HEK293 (cell line): ENCODE measurements at regions of chr13 and their contacts with region 1.

Region 1: GRCh38 chr13:75694722-75695121 is 58.6 kb downstream of the LMO7 start:
- H3K4me3 ChIP-seq: no peak overlapping the region
- H3K27ac ChIP-seq: no peak overlapping the region
- H3K4me1 ChIP-seq: no peaks in the 10 kb centered on the region
- CTCF ChIP-seq: no peak

Region 2: GRCh38 chr13:75521956-75522355 is 172.8 kb before region 1 on chr13:
- CTCF ChIA-PET with region 1: no interaction called
- POLR2A ChIA-PET with region 1: no interaction called
- H3K4me3 ChIP-seq: no peak overlapping the region
- H3K27ac ChIP-seq: no peak overlapping the region
- H3K4me1 ChIP-seq: no peaks in the 10 kb centered on the region
- CTCF ChIP-seq: no peak

Region 3: GRCh38 chr13:75704579-75705320 is 10.0 kb after region 1 on chr13:
- CTCF ChIA-PET with region 1: interaction called, 27 read pairs
- POLR2A ChIA-PET with region 1: no interaction called
- H3K4me3 ChIP-seq: no peak overlapping the region
- H3K27ac ChIP-seq: no peak overlapping the region
- H3K4me1 ChIP-seq: no peaks in the 10 kb centered on the region
- CTCF ChIP-seq: no peak

Region 4: GRCh38 chr13:75715601-75716523 is 21.1 kb after region 1 on chr13:
- CTCF ChIA-PET with region 1: interaction called, 22 read pairs
- POLR2A ChIA-PET with region 1: no interaction called
- H3K4me3 ChIP-seq: no peak overlapping the region
- H3K27ac ChIP-seq: no peak overlapping the region
- H3K4me1 ChIP-seq: no peaks in the 10 kb centered on the region
- CTCF ChIP-seq: no peak

Region 5: DNA sequence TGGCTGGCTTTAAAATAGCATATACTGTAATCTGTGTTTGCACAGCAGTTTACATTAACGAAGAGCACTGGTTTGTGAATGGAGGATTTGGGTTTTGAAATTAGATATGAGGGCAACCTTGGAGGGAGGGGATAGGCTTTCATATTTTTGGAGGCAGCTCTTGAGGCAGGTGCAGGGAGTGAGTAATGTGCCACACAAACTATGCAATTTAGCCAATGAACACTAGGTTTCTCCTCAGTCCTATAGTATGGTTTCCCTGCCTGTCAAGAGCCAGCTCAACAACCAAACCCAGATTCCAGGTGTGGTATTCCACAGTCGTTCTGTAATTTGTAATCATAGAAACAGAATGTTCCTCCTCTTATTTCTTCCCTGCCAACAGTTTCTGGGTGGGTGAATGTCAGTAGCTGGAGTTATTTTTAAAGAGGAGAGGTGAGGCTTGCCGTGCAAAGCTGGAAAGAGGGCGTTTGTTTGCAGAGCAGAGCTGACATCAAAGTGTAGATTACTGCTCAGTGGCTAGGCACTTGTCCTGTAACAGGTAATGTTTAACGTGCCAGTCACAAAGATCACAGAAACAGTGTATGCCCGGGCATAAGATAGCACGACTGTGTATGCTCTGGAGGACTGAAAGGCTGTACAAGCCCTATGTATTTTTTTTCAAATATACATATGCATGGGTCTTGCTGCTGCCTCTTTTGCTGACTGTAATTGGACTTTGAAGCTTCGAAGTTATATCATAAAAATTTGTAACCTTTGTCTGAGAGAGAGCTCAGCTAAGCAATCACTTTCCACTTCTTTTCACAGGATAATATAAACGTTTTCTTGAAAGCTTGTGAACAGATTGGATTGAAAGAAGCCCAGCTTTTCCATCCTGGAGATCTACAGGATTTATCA is 65.7 kb after region 1 on chr13:
- CTCF ChIA-PET with region 1: interaction called, 13 read pairs
- POLR2A ChIA-PET with region 1: no interaction called
- H3K4me3 ChIP-seq: no peak overlapping the region; the same call in 1 of the 2 replicates
- H3K27ac ChIP-seq: no peak overlapping the region
- H3K4me1 ChIP-seq: no peaks in the 10 kb centered on the region
- CTCF ChIP-seq: no peak

Region 6: DNA sequence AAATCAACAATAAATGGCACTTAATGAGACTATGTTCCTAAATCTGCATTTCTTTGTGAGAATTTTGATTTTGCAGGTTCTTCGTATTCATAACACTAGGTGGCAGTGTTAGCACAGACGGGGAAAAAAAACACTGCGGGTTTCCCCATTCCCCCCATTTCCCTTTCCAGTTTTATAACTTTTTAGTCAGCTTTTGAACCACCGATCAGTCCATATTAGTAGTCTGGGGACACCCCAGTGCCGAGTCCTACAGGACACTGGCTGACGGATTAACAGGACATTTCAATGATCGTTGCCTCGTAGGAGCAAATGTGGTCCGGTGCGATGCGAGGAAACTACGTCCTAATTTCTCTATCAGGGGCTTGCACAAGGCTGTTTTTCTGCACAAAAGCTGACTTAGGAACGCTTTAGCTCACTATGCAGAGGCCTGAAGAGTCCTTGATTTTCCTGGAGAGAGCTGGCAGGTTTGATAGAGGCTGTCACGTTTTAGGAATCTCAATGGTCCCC is 175.7 kb after region 1 on chr13:
- CTCF ChIA-PET with region 1: interaction called, 49 read pairs
- POLR2A ChIA-PET with region 1: no interaction called
- H3K4me3 ChIP-seq: no peak overlapping the region
- H3K27ac ChIP-seq: no peak overlapping the region
- H3K4me1 ChIP-seq: no peaks in the 10 kb centered on the region
- CTCF ChIP-seq: no peak

Region 7: DNA sequence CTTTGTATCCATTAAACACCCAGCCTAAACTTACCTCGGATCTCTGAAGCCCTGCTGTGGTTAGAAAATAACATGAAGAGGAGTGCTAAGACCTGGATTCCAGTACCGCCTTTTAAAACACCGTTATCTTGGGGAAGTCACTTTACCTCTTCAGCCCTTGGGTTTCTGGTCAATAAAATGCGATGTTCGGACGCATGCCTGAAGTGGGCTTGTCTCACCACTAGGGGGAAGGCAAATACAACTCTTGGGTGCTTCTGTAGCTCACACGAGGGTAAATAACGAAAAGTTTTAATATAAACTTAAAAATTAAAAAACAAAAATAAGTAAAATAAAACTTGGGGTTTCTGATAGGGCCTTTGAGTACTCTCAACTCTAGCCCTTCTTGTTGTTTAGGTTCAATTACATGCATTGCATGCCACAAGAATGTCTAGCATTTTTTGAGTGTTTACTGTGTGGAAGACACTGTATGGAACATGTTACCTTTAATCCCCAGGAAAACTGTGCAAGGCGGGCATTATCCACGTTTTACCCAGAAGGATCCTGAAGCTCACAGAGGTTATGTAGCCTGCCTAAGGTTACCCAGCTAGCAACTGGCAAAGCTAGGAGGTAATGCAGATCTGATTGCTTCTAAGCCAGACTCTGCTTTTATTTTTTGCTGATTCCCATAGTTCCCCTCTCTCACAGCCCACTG is 181.8 kb after region 1 on chr13:
- CTCF ChIA-PET with region 1: interaction called, 49 read pairs
- POLR2A ChIA-PET with region 1: no interaction called
- H3K4me3 ChIP-seq: no peak overlapping the region
- H3K27ac ChIP-seq: no peak overlapping the region
- H3K4me1 ChIP-seq: no peaks in the 10 kb centered on the region
- CTCF ChIP-seq: peak; percentile 25; the same call in 1 of the 2 replicates